ENCODE measurements at regions of chr1 and their contacts with region 1.

Region 1: GRCh38 chr1:116570358-116571200 is at the start of gene CD58:
- DNase-seq: peak; percentile 91
- ATAC-seq: peak; percentile 83
- H3K4me3 ChIP-seq: peak within 1 kb of the TSS; percentile 92
- H3K27ac ChIP-seq: peak within 1 kb of the TSS; percentile 91
- H3K4me1 ChIP-seq: peaks cover 55% of the 10 kb centered on the region
- H3K27me3 ChIP-seq: no peaks in the 10 kb centered on the region
- CTCF ChIP-seq: peak; percentile 67
- total RNA-seq, gene CD58: 15.2 and 26.9 TPM in 2 replicates

Region 2: GRCh38 chr1:116529199-116529616 is 41.4 kb before region 1 on chr1:
- CTCF ChIA-PET with region 1: no interaction called
- POLR2A ChIA-PET with region 1: interaction called, 14 read pairs
- intact Hi-C with region 1: no loop called
- DNase-seq: no peak
- ATAC-seq: no peak
- H3K4me3 ChIP-seq: no peak overlapping the region
- H3K27ac ChIP-seq: no peak overlapping the region
- H3K4me1 ChIP-seq: no peaks in the 10 kb centered on the region
- H3K27me3 ChIP-seq: no peaks in the 10 kb centered on the region
- CTCF ChIP-seq: no peak

Region 3: GRCh38 chr1:116737020-116737854 is 166.7 kb after region 1 on chr1:
- CTCF ChIA-PET with region 1: interaction called, 5 read pairs
- POLR2A ChIA-PET with region 1: no interaction called
- intact Hi-C with region 1: loop called (anchors 10 kb)
- DNase-seq: peak; percentile 68
- ATAC-seq: peak; percentile 59; the same call in 1 of the 2 replicates
- H3K4me3 ChIP-seq: no peak overlapping the region
- H3K27ac ChIP-seq: no peak overlapping the region
- H3K4me1 ChIP-seq: no peaks in the 10 kb centered on the region
- H3K27me3 ChIP-seq: no peaks in the 10 kb centered on the region
- CTCF ChIP-seq: peak; percentile 89

Region 4: GRCh38 chr1:116909510-116910378 is 339.2 kb after region 1 on chr1 and contains the start of gene PTGFRN:
- CTCF ChIA-PET with region 1: no interaction called
- POLR2A ChIA-PET with region 1: no interaction called
- intact Hi-C with region 1: loop called (anchors 10 kb)
- DNase-seq: peak; percentile 71
- ATAC-seq: peak; percentile 48
- H3K4me3 ChIP-seq: peak within 1 kb of the TSS; percentile 85
- H3K27ac ChIP-seq: peak within 1 kb of the TSS; percentile 36
- H3K4me1 ChIP-seq: peaks cover 60% of the 10 kb centered on the region
- H3K27me3 ChIP-seq: no peaks in the 10 kb centered on the region
- CTCF ChIP-seq: no peak
- total RNA-seq, gene PTGFRN: 57.4 and 77.8 TPM in 2 replicates

Region 5: GRCh38 chr1:117059678-117060440 is 489.3 kb after region 1 on chr1 and contains the start of gene TTF2:
- CTCF ChIA-PET with region 1: interaction called, 3 read pairs
- POLR2A ChIA-PET with region 1: no interaction called
- intact Hi-C with region 1: loop called (anchors 1 kb)
- DNase-seq: peak; percentile 98
- ATAC-seq: peak; percentile 96
- H3K4me3 ChIP-seq: peak within 1 kb of the TSS; percentile 89
- H3K27ac ChIP-seq: peak within 1 kb of the TSS; percentile 68
- H3K4me1 ChIP-seq: peaks cover 14% of the 10 kb centered on the region
- H3K27me3 ChIP-seq: no peaks in the 10 kb centered on the region
- CTCF ChIP-seq: no peak
- total RNA-seq, gene TTF2: 25.1 and 28.8 TPM in 2 replicates